GM12878 (cell line): ENCODE measurements at regions of chr2 and their contacts with region 1.

Region 1: GRCh38 chr2:95165129-95166064 is at the start of gene ZNF2:
- DNase-seq: peak; percentile 75
- ATAC-seq: peak; percentile 98
- H3K4me3 ChIP-seq: peak within 1 kb of the TSS; percentile 86
- H3K27ac ChIP-seq: peak within 1 kb of the TSS; percentile 95
- H3K4me1 ChIP-seq: peaks cover 3% of the 10 kb centered on the region; the same call in 1 of the 2 replicates
- H3K27me3 ChIP-seq: no peaks in the 10 kb centered on the region
- CTCF ChIP-seq: no peak
- EP300 ChIP-seq: no peak
- POLR2A ChIP-seq: peak; percentile 99
- RAD21 ChIP-seq: no peak
- polyA plus RNA-seq, gene ZNF2: 3.0 to 3.4 TPM

Region 2: GRCh38 chr2:94982675-94983074 is 182.7 kb before region 1 on chr2:
- CTCF ChIA-PET with region 1: no interaction called
- POLR2A ChIA-PET with region 1: no interaction called
- RAD21 ChIA-PET with region 1: no interaction called
- SMC1A ChIA-PET with region 1: no interaction called
- in situ Hi-C with region 1: no loop called
- intact Hi-C with region 1: no loop called
- DNase-seq: no peak
- ATAC-seq: no peak
- H3K4me3 ChIP-seq: no peak overlapping the region
- H3K27ac ChIP-seq: no peak overlapping the region
- H3K4me1 ChIP-seq: no peaks in the 10 kb centered on the region
- H3K27me3 ChIP-seq: no peaks in the 10 kb centered on the region
- CTCF ChIP-seq: no peak
- EP300 ChIP-seq: no peak
- POLR2A ChIP-seq: no peak
- RAD21 ChIP-seq: no peak

Region 3: GRCh38 chr2:95121407-95122196 is 43.8 kb before region 1 on chr2 and contains the start of gene MRPS5:
- CTCF ChIA-PET with region 1: interaction called, 10 read pairs
- POLR2A ChIA-PET with region 1: interaction called, 8 read pairs
- RAD21 ChIA-PET with region 1: interaction called, 17 read pairs
- SMC1A ChIA-PET with region 1: interaction called, 6 read pairs
- in situ Hi-C with region 1: no loop called
- intact Hi-C with region 1: loop called (anchors 2 kb)
- DNase-seq: peak; percentile 13
- ATAC-seq: peak; percentile 93
- H3K4me3 ChIP-seq: peak within 1 kb of the TSS; percentile 93
- H3K27ac ChIP-seq: peak within 1 kb of the TSS; percentile 98
- H3K4me1 ChIP-seq: peaks cover 16% of the 10 kb centered on the region
- H3K27me3 ChIP-seq: no peaks in the 10 kb centered on the region
- CTCF ChIP-seq: 0 out of 6 replicates have a peak, but pooled peaks of 2 of the 3 experiments have one; percentile 5 to 23
- EP300 ChIP-seq: no peak
- POLR2A ChIP-seq: peak; percentile 94
- RAD21 ChIP-seq: no peak
- polyA plus RNA-seq, gene MRPS5: 54.8 to 77.0 TPM

Region 4: GRCh38 chr2:95220449-95220848 is 55.1 kb after region 1 on chr2:
- CTCF ChIA-PET with region 1: no interaction called
- POLR2A ChIA-PET with region 1: no interaction called
- RAD21 ChIA-PET with region 1: no interaction called
- SMC1A ChIA-PET with region 1: no interaction called
- in situ Hi-C with region 1: no loop called
- intact Hi-C with region 1: no loop called
- DNase-seq: no peak
- ATAC-seq: no peak
- H3K4me3 ChIP-seq: no peak overlapping the region
- H3K27ac ChIP-seq: no peak overlapping the region
- H3K4me1 ChIP-seq: no peaks in the 10 kb centered on the region
- H3K27me3 ChIP-seq: no peaks in the 10 kb centered on the region
- CTCF ChIP-seq: no peak
- EP300 ChIP-seq: no peak
- POLR2A ChIP-seq: no peak
- RAD21 ChIP-seq: no peak